Left lung (tissue), 14 donors: ENCODE measurements at regions of chr4 and their contacts with region 1.

Region 1: GRCh38 chr4:128565565-128566186 is 243.8 kb upstream of the JADE1 start:
- DNase-seq: peak in 2 of 4 donors; percentile 38 to 40
- ATAC-seq: peak; percentile 76
- H3K4me3 ChIP-seq: no peak overlapping the region
- H3K27ac ChIP-seq: no peak overlapping the region
- H3K4me1 ChIP-seq: peaks cover 2 to 17% of the 10 kb centered on the region in 2 donors
- H3K27me3 ChIP-seq: no peaks in the 10 kb centered on the region
- CTCF ChIP-seq: peak in 1 of 2 donors; percentile 42

Region 2: GRCh38 chr4:128454281-128455075 is 111.2 kb before region 1 on chr4:
- intact Hi-C with region 1: loop called in 1 of 2 experiments (anchors 10 kb)
- DNase-seq: peak in 3 of 4 donors; percentile 64 to 87 (median 75)
- ATAC-seq: peak; percentile 97
- H3K4me3 ChIP-seq: no peak overlapping the region
- H3K27ac ChIP-seq: peak overlapping the region in 1 of 2 donors; percentile 21
- H3K4me1 ChIP-seq: peaks cover 4 to 13% of the 10 kb centered on the region in 2 donors
- H3K27me3 ChIP-seq: no peaks in the 10 kb centered on the region
- CTCF ChIP-seq: peak; percentile 58 to 61

Region 3: GRCh38 chr4:128737098-128737513 is 171.4 kb after region 1 on chr4:
- intact Hi-C with region 1: no loop called
- DNase-seq: no peak
- ATAC-seq: no peak
- H3K4me3 ChIP-seq: no peak overlapping the region
- H3K27ac ChIP-seq: no peak overlapping the region
- H3K4me1 ChIP-seq: no peaks in the 10 kb centered on the region
- H3K27me3 ChIP-seq: no peaks in the 10 kb centered on the region
- CTCF ChIP-seq: no peak